ENCODE measurements at regions of chr20 and their contacts with region 1.

Region 1: GRCh38 chr20:36861875-36862801 is 13.8 kb upstream of the TLDC2 start:
- DNase-seq: peak; percentile 93

Region 2: GRCh38 chr20:36421641-36422040 is 440.5 kb before region 1 on chr20:
- intact Hi-C with region 1: no loop called
- DNase-seq: no peak

Region 3: DNA sequence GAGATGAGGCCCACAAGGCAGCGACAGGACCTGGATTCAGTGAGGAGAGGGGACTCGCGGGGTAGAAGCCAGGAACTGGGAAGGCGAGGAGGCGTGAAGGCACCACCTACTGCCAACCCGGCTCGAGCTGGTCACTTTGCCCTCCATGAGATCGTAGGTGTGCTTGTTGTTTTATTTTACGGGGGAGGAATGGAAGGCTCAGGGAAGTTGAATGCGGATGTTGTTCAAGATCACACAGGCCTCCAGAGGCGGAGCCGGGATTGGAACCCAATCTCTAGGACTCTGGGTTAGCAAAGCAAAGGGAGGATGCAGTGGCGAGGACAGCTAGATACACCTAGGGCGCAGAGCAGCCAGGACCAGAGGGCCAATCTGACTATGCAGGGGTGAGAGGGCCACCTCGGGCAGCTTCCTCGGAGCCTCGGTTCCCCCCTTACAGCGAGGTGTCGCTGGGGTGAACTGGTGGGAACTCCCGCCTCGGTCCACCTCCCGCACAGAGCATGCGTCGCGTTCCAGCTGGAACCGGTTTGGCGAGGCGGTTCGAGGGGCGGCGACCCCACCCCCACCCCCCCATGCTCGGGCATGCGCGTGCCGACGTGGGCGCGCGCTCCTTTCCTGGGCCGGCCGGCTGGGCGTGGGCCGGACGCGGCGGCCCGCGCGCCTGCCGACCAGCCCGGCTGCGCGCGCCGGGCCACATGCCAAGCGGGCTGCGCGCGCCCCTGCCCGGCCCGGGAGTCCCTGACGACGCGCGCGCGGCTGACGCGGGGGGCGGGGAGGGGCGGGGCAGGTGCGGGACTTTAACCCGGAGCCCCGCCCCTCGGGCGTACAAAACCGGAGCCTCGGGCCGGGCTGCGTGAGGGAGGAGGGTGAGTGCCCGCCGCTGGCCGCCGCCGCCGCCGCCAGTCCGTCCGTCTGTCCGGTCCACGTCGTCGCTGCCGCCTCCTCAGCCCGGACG is 401.2 kb before region 1 on chr20:
- intact Hi-C with region 1: loop called (anchors 10 kb)
- DNase-seq: peak; percentile 95

Region 4: DNA sequence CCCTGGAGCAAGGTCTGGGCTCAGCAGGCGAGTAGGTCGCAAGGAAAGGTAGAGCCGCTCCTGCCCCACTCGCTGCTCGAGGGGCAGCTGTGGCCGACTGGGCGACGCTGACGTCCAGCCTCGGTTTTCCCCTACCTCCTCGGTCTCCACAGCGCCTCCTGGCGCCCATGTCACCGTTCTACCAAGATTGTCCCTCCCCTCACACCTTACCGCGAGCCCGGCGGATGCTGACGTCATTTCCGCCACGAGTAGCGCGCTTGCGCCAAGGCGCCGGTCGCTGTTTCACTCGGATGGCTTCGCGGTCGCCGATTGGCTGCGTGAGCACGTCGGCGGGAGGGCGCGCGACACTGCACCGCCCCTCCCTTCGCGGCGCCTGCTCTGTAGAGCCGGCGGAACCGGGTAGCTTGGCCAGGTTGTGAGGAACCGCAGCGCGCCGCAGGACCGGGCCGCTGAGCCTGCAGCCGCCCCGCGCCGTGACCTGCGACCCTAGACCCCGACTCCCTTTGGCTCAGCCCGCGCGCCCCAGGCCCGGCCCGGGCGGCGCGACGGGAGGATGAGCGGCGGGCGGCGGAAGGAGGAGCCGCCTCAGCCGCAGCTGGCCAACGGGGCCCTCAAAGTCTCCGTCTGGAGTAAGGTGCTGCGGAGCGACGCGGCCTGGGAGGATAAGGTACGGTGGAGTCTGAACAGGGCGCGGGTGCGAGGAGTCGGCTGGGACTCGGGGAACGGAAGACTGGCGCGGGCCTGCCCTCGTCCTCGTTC is 256.6 kb before region 1 on chr20 and contains the start of gene RAB5IF:
- intact Hi-C with region 1: loop called (anchors 10 kb)
- DNase-seq: peak; percentile 99
- total RNA-seq, gene RAB5IF: 50.2 TPM

Region 5: GRCh38 chr20:36717657-36718056 is 144.5 kb before region 1 on chr20:
- intact Hi-C with region 1: no loop called
- DNase-seq: no peak

Region 6: DNA sequence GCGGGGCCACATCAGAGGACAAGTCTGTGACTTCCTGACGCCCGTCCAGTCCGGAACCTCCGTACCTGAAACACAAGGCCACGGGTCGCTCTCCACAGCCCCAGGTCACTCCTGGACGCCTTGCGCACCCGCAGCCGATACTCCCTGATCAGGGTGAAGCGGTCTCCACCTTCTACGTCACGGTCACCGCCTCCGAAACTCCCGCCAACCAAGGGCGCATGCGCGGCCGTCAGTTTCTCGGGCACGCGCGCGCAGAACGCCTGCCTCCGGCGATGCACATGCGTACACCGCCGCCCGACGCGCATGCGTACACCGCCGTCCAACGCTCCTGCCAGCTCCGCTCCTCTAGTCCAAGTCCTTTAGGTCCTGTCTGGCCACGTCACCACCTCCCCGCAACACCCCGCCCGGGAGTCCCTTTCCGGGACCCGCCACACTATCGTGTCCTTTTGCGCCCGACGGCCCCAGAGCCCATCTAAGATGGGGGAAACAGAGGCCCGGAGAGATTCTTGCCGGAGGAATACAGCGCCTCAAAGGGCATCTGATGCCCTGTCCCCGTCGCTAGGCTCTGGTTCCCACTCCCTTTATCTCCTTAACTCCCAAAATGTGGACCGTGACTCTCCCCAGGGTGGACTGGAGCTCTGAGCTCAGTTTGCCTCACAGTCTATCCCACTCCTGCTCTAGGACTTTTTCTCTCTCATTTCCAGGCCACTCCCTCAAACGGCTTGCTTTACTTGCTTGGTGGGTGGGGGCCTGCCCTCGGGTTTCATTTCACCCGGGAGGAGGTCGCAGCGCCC is 88.3 kb before region 1 on chr20 and contains the start of gene DSN1:
- intact Hi-C with region 1: loop called (anchors 1 kb)
- DNase-seq: peak; percentile 99
- total RNA-seq, gene DSN1: 3.8 TPM

Region 7: GRCh38 chr20:36792422-36792821 is 69.7 kb before region 1 on chr20:
- intact Hi-C with region 1: loop called (anchors 5 kb)
- DNase-seq: no peak

Region 8: GRCh38 chr20:36830791-36831691 is 31.1 kb before region 1 on chr20:
- intact Hi-C with region 1: loop called (anchors 1 kb)
- DNase-seq: peak; percentile 84

Region 9: DNA sequence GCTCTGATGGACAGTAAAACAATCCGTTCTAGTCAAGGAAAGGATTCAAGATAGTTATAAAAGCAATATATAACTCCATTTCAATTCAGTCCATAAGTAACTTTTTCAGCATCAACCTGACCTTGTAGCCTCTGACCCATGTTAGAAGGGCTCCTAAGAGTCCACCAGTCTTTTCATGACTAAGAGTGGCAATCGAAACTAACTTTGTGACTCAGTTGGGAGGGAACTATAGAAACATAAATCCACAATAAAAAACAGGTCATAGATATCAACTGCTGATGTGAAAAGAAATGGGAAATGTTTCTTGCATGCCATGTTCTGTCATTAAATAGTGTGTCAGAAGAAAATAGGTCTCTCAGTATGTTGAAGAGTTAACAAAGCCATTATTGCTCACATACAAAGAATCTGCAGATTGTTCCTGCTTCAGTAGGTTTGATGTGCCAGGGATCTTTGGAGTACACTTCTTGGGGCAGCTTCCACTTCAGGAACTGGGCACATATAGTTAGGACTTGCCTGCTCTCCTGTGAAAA is 249.9 kb after region 1 on chr20:
- intact Hi-C with region 1: no loop called
- DNase-seq: no peak